ENCODE measurements at regions of chr6 and their contacts with region 1.

Region 1: GRCh38 chr6:166474721-166475565 is 92.2 kb upstream of the MPC1 start:
- DNase-seq: no peak
- H3K4me3 ChIP-seq: no peak overlapping the region
- H3K27ac ChIP-seq: no peak overlapping the region
- H3K4me1 ChIP-seq: peaks cover 7% of the 10 kb centered on the region
- H3K27me3 ChIP-seq: no peaks in the 10 kb centered on the region
- CTCF ChIP-seq: no peak

Region 2: DNA sequence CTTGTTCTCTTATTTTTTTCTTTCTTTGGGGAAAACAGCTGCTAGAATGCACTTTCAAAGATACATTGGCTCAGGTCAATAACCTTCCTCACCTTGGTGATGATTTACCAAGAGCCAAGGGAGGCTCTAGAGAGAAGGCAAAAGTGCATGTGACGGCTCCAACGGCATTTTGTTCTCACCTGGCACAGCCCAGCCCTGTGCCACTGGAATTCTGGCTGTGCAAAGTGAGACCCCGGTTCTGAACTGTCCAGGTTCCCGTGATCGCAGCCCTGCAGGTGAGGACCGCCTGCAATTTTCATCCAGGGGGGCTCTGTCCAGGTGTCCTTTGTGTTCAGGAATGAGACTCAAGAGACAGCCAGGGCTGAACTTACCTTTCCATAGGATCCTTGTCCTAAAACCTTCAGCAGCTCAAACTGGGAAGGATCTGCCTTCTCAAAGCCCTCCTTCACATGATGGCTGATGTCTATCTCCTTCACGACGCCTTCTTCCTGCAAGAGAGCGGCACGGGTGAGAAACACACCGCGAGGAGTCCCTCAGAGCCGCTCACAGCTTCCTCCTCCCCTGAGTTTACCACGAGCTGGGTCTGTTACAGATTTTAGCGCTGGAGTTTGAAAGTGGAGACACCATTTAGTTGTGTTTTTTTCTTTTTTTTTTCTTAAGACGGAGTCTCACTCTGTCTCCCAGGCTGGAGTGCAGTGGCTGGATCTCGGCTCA is 63.5 kb after region 1 on chr6:
- CTCF ChIA-PET with region 1: no interaction called
- dilution Hi-C with region 1: loop called (anchors 5 kb)
- in situ Hi-C with region 1: no loop called
- intact Hi-C with region 1: no loop called
- DNase-seq: no peak
- H3K4me3 ChIP-seq: no peak overlapping the region
- H3K27ac ChIP-seq: no peak overlapping the region
- H3K4me1 ChIP-seq: peaks cover 7% of the 10 kb centered on the region
- H3K27me3 ChIP-seq: no peaks in the 10 kb centered on the region
- CTCF ChIP-seq: no peak

Region 3: DNA sequence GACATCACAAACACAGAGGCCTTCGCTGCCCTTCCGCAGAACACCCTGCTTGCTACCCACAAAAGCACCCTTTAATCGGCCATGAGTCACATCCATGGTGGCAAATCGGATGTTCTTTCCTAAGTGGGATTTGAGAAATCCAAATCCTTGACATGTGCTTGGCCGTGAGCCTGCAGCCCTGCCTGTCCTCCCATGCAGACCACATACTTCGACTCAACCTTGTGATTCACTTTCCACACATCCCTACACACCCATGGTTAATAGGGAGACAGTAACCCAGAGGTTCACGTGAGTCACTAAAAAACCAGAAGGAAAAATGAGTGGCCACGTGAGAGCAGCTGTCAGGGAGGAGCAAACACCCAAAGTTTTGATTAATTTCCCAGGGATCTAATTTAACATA is 92.2 kb after region 1 on chr6:
- CTCF ChIA-PET with region 1: no interaction called
- dilution Hi-C with region 1: no loop called
- in situ Hi-C with region 1: no loop called
- intact Hi-C with region 1: no loop called
- DNase-seq: peak; percentile 98
- H3K4me3 ChIP-seq: no peak overlapping the region
- H3K27ac ChIP-seq: peak overlapping the region; percentile 69
- H3K4me1 ChIP-seq: peaks cover 28% of the 10 kb centered on the region
- H3K27me3 ChIP-seq: no peaks in the 10 kb centered on the region
- CTCF ChIP-seq: no peak

Measured in mammary epithelial cell (primary cell).